ENCODE measurements at regions of chr2 and their contacts with region 1.

Region 1: DNA sequence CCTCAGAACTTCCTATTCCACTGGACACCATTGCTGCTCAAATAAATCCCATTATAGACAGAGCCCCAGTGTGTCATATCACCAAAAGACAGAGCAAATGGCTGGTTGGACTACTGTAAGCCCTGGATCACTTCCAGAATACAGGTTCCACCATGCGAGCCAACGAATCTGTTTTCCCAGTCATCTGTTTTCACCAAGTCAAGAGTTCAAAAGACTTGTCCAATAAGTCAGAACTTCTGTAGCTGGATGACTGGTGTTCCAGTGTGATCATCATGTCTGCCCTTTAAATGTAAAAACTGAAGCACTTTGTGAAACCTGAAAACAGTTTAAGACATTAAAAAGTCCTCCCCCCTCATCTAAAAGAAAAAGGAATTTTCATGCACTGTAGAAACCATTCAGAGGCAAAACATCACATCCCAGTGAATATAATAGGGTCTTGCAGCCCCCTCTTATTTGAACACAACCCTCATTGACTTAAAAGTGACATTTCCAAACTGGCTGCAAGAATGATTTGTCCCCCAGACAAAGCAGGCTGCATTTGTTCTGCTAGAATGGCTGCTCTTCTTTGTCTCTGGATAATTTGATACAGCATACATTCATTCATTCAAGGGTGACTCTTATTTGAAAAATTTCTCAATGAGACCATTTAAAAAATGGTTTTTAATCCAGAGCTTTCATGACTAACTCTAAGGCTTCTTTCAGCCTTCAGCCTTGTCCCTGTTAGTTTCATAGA is 64.6 kb upstream of the TANC1 start:
- DNase-seq: no peak
- H3K4me3 Mint-ChIP-seq: no peak overlapping the region
- H3K27ac Mint-ChIP-seq: no peak overlapping the region
- H3K4me1 Mint-ChIP-seq: no peaks in the 10 kb centered on the region
- H3K27me3 Mint-ChIP-seq: no peaks in the 10 kb centered on the region

Region 2: DNA sequence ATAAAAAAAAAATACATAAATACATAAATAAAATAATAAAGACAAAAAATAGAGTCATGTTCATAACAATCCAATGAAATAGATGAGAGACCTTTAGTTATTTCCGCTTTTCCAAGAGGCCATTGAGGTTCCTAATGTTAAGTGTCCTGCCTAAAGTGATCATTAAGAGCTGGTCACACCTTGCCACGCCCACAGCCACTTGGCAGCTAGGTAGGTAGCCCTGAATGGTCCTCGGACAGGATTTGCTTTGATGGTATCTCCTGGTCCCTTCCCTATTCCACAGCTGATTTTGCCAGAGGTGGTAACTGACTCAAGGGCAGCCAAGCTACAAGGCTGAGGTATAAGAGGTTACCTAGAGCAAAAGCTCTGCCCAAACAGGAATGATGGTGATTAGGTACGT is 40.1 kb after region 1 on chr2:
- CTCF ChIA-PET with region 1: no interaction called
- intact Hi-C with region 1: no loop called
- DNase-seq: no peak
- H3K4me3 Mint-ChIP-seq: no peak overlapping the region
- H3K27ac Mint-ChIP-seq: no peak overlapping the region
- H3K4me1 Mint-ChIP-seq: no peaks in the 10 kb centered on the region
- H3K27me3 Mint-ChIP-seq: no peaks in the 10 kb centered on the region

Region 3: GRCh38 chr2:159035790-159036411 is 132.0 kb after region 1 on chr2:
- CTCF ChIA-PET with region 1: no interaction called
- intact Hi-C with region 1: loop called (anchors 5 kb)
- DNase-seq: peak; percentile 47
- H3K4me3 Mint-ChIP-seq: no peak overlapping the region
- H3K27ac Mint-ChIP-seq: no peak overlapping the region
- H3K4me1 Mint-ChIP-seq: no peaks in the 10 kb centered on the region
- H3K27me3 Mint-ChIP-seq: no peaks in the 10 kb centered on the region

Region 4: DNA sequence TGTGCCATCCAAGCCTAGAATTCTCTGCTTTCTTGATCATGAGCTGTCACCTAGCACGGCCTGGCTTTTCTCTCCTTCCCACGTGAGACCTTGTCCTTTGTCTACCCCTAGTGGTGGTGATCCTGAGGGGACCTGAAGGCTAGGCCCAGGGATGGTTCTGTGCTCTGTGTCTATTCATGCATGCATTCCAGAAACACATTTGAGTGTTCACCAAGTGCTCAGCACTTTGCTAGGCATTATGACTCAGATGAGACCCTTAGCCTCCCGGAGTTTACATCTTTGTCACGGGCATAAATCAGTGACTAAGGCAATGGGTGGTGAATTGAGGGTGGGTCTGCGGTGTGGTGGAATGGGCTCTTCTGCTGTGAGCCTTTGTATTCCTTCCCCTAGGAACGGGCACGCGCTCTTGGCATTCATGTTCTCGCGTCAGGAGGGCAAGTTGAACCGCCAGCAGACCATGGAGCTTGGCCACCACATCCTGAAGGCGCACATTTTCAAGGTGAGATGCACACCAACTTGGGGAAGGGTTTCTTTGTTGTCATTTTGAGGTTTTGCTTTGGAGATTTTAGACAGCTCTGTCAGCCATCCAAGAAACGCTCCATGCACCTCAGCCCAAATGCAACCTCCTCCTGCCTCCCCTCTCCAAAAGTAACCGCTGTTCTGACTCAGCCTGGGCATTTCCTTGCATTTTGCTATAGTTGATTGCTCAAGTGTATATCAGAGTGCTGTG is 281.7 kb after region 1 on chr2:
- CTCF ChIA-PET with region 1: no interaction called
- intact Hi-C with region 1: loop called (anchors 1 kb)
- DNase-seq: peak; percentile 38
- H3K4me3 Mint-ChIP-seq: no peak overlapping the region
- H3K27ac Mint-ChIP-seq: no peak overlapping the region
- H3K4me1 Mint-ChIP-seq: no peaks in the 10 kb centered on the region
- H3K27me3 Mint-ChIP-seq: no peaks in the 10 kb centered on the region

Region 5: DNA sequence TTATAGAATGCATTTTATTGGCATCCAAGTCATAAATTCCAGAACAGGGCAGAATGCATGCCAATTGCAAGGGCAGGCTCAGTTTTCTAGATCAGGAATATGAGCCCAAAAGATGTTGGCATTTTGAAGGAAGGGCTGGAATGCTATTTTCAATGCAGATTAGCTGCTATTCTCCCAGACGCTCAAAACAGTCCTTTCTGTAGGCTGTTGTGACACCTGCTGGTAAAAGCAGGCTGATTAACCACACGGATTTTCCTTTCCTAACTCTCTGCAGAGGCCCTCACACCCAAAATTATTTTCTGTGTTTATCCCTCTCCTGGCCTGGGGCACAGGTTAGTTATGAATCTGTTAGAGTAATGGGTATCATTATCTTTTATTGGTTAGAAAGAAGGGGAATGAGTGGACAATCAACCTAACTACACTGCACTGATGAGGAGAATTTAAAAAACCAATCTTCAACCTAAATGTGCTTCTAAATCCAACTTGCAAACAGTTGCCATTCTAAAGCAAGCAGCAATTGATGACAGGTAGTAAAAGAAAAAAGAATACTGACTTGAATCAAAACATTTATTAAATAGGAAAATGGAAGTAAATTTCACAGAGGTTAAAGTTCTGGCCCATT is 1064.5 kb after region 1 on chr2:
- CTCF ChIA-PET with region 1: no interaction called
- intact Hi-C with region 1: loop called (anchors 1 kb)
- DNase-seq: peak; percentile 56
- H3K4me3 Mint-ChIP-seq: no peak overlapping the region
- H3K27ac Mint-ChIP-seq: no peak overlapping the region
- H3K4me1 Mint-ChIP-seq: no peaks in the 10 kb centered on the region
- H3K27me3 Mint-ChIP-seq: no peaks in the 10 kb centered on the region